Dorsolateral prefrontal cortex (tissue), 120 donors: ENCODE measurements at regions of chr2 and their contacts with region 1.

Region 1: DNA sequence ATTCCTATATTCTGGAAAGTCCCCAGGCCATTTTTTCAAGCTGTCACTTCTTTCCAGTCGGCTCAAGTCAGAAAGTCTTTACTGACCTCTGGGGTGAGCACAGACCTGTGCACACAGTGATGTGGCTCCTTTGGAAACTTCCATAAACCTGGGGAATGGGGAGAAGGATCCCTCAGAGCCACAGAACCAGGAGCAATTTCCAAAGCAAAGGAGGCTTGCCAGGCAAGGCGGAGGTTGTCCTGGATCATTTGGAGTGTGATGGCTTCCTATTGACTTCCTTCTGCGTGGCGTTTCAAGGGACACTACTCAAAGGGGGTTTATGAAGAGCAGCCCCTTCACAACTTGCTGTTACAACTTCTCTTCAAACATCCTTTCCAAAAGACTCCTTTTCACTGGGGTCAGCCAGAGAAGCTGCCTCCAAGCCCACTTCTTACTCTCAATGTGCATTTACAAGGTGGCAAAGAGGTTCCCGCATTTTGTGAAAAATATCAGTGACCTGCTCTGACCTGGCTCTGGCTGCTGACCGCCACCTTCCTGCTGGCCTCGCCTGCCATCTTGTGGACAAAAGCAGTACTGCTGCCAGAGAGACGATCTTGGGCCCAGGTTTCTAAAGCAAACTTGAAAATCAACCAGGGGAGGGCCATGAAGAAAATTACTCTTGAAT is 18.2 kb upstream of the TMEM247 start:
- DNase-seq: peak; percentile 70 to 89 (median 78)
- H3K4me3 ChIP-seq: peak overlapping the region in 32 of 59 donors; percentile 1 to 52 (median 22)
- H3K27ac ChIP-seq: peak overlapping the region; percentile 67 to 97 (median 90)
- H3K27me3 ChIP-seq: no peaks in the 10 kb centered on the region
- CTCF ChIP-seq: peak; percentile 96 to 100 (median 99)

Region 2: GRCh38 chr2:46000660-46001059 is 460.5 kb before region 1 on chr2:
- intact Hi-C with region 1: no loop called
- DNase-seq: no peak
- H3K4me3 ChIP-seq: no peak overlapping the region
- H3K27ac ChIP-seq: no peak overlapping the region
- H3K27me3 ChIP-seq: no peaks in the 10 kb centered on the region
- CTCF ChIP-seq: no peak

Region 3: GRCh38 chr2:46010925-46011490 is 450.1 kb before region 1 on chr2:
- intact Hi-C with region 1: loop called in 1 of 2 experiments (anchors 2 kb)
- DNase-seq: no peak
- H3K4me3 ChIP-seq: no peak overlapping the region
- H3K27ac ChIP-seq: no peak overlapping the region
- H3K27me3 ChIP-seq: no peaks in the 10 kb centered on the region
- CTCF ChIP-seq: peak; percentile 44 to 84 (median 66)

Region 4: GRCh38 chr2:46062637-46063412 is 398.3 kb before region 1 on chr2:
- intact Hi-C with region 1: loop called (anchors 2 kb)
- DNase-seq: peak in 8 of 10 donors; percentile 52 to 78 (median 68)
- H3K4me3 ChIP-seq: no peak overlapping the region
- H3K27ac ChIP-seq: peak overlapping the region in 34 of 59 donors; percentile 1 to 75 (median 44)
- H3K27me3 ChIP-seq: no peaks in the 10 kb centered on the region
- CTCF ChIP-seq: peak; percentile 76 to 96 (median 89)

Region 5: GRCh38 chr2:46257476-46257875 is 203.7 kb before region 1 on chr2:
- intact Hi-C with region 1: no loop called
- DNase-seq: no peak
- H3K4me3 ChIP-seq: no peak overlapping the region
- H3K27ac ChIP-seq: no peak overlapping the region
- H3K27me3 ChIP-seq: no peaks in the 10 kb centered on the region
- CTCF ChIP-seq: no peak

Region 6: GRCh38 chr2:46296840-46297545 is 164.2 kb before region 1 on chr2 and contains the start of gene EPAS1:
- intact Hi-C with region 1: loop called in 1 of 2 experiments (anchors 2 kb)
- DNase-seq: peak; percentile 44 to 84 (median 76)
- H3K4me3 ChIP-seq: peak within 1 kb of the TSS; percentile 51 to 82 (median 70)
- H3K27ac ChIP-seq: peak within 1 kb of the TSS; percentile 31 to 94 (median 85)
- H3K27me3 ChIP-seq: peaks cover 0 to 46% (median 17%) of the 10 kb centered on the region in 45 donors
- CTCF ChIP-seq: no peak
- total RNA-seq, gene EPAS1: 63.6 to 481 (median 129) TPM

Region 7: DNA sequence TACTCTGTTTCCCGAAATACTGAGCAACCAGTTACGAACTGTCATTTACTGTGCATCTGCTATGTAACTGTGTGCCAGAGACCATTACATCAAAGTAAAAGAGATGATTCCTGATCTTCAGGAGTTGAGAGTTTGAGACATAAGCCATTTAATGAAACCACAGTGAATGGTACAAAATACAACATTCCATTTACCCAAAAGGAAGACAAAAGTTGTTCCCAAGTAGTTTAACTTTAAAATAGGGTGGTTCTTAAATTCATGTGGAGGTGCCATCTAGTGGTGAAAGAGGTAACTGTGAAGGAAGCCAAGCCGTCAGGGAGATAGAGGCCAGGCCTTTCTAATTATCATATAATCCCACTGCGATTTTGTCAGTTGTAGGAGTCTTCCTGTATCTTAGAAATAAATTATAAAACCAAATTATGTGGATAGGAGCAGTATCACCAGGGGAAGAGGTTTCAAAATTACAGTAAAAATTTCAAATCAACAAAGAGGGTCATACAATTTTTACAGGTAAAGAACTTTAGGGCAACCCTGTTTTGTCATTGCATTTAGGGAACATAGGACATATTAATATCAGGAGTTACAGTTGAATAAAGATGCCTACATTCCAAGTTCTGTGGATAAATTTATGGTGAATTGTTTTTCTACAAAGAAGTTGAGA is 96.2 kb before region 1 on chr2:
- intact Hi-C with region 1: loop called in 1 of 2 experiments (anchors 1 kb)
- DNase-seq: peak in 2 of 10 donors; percentile 18 to 34
- H3K4me3 ChIP-seq: no peak overlapping the region
- H3K27ac ChIP-seq: peak overlapping the region in 12 of 59 donors; percentile 4 to 51 (median 24)
- H3K27me3 ChIP-seq: no peaks in the 10 kb centered on the region
- CTCF ChIP-seq: peak; percentile 63 to 93 (median 88)

Region 8: GRCh38 chr2:46377176-46377581 is 84.0 kb before region 1 on chr2:
- intact Hi-C with region 1: loop called in 1 of 2 experiments (anchors 5 kb)
- DNase-seq: peak in 3 of 10 donors; percentile 25 to 57 (median 48)
- H3K4me3 ChIP-seq: peak overlapping the region in 1 of 59 donors; percentile 25
- H3K27ac ChIP-seq: peak overlapping the region in 25 of 59 donors; percentile 2 to 59 (median 35)
- H3K27me3 ChIP-seq: no peaks in the 10 kb centered on the region
- CTCF ChIP-seq: peak in 7 of 56 donors; percentile 15 to 29 (median 19)

Region 9: GRCh38 chr2:46387886-46388565 is 73.1 kb before region 1 on chr2:
- intact Hi-C with region 1: loop called in 1 of 2 experiments (anchors 1 kb)
- DNase-seq: peak in 7 of 10 donors; percentile 63 to 72 (median 67)
- H3K4me3 ChIP-seq: no peak overlapping the region
- H3K27ac ChIP-seq: peak overlapping the region; percentile 49 to 96 (median 88)
- H3K27me3 ChIP-seq: no peaks in the 10 kb centered on the region
- CTCF ChIP-seq: peak in 1 of 56 donors; percentile 5